GM12878 (cell line): ENCODE measurements at regions of chr12 and their contacts with region 1.

Region 1: GRCh38 chr12:94149119-94149780 is 873 bp downstream of the PLXNC1 start:
- DNase-seq: no peak
- ATAC-seq: peak; percentile 50
- H3K4me3 ChIP-seq: peak overlapping the region; percentile 91
- H3K27ac ChIP-seq: peak overlapping the region; percentile 70
- H3K4me1 ChIP-seq: peaks cover 13% of the 10 kb centered on the region
- H3K27me3 ChIP-seq: no peaks in the 10 kb centered on the region
- CTCF ChIP-seq: peak; percentile 49 to 86 (median 70); a peak in 5 of 6 replicates
- EP300 ChIP-seq: no peak
- POLR2A ChIP-seq: peak; percentile 66
- RAD21 ChIP-seq: peak; percentile 60

Region 2: GRCh38 chr12:94172973-94173372 is 23.7 kb after region 1 on chr12:
- CTCF ChIA-PET with region 1: interaction called, 7 read pairs
- POLR2A ChIA-PET with region 1: interaction called, 10 read pairs
- RAD21 ChIA-PET with region 1: interaction called, 60 read pairs
- SMC1A ChIA-PET with region 1: interaction called, 367 read pairs
- in situ Hi-C with region 1: no loop called
- intact Hi-C with region 1: no loop called
- DNase-seq: no peak
- ATAC-seq: no peak
- H3K4me3 ChIP-seq: no peak overlapping the region
- H3K27ac ChIP-seq: peak overlapping the region; percentile 92
- H3K4me1 ChIP-seq: peaks cover 47% of the 10 kb centered on the region
- H3K27me3 ChIP-seq: no peaks in the 10 kb centered on the region
- CTCF ChIP-seq: no peak
- EP300 ChIP-seq: no peak
- POLR2A ChIP-seq: no peak
- RAD21 ChIP-seq: no peak

Region 3: DNA sequence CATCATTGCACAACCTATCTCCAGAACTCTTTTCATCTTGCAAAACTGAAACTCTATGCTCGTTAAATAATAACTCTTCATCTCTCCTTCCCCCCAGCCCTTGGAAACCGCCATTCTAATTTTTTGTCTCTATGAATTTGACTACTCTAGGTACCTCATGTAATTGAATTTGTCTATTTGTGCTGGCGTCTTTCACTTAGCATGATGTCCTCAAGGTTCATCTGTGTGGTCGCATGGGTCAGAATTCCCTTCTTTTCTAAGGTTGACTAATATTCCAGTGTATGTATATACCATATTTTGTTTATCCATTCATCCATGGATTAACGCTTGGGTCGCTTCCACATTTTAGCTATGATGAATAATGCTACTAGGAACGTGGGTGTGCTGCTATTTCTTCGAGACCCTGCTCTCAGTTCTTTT is 79.2 kb after region 1 on chr12:
- CTCF ChIA-PET with region 1: interaction called, 3 read pairs
- POLR2A ChIA-PET with region 1: interaction called, 3 read pairs
- RAD21 ChIA-PET with region 1: interaction called, 6 read pairs
- SMC1A ChIA-PET with region 1: interaction called, 5 read pairs
- in situ Hi-C with region 1: no loop called
- intact Hi-C with region 1: loop called (anchors 2 kb)
- DNase-seq: no peak
- ATAC-seq: peak; percentile 83
- H3K4me3 ChIP-seq: no peak overlapping the region
- H3K27ac ChIP-seq: 0 out of 2 replicates have a peak overlapping the region, but pooled peaks have one; percentile 13
- H3K4me1 ChIP-seq: peaks cover 39% of the 10 kb centered on the region
- H3K27me3 ChIP-seq: no peaks in the 10 kb centered on the region
- CTCF ChIP-seq: no peak
- EP300 ChIP-seq: peak in 1 of 2 experiments; percentile 39; a peak in 1 of 4 replicates
- POLR2A ChIP-seq: no peak
- RAD21 ChIP-seq: no peak

Region 4: DNA sequence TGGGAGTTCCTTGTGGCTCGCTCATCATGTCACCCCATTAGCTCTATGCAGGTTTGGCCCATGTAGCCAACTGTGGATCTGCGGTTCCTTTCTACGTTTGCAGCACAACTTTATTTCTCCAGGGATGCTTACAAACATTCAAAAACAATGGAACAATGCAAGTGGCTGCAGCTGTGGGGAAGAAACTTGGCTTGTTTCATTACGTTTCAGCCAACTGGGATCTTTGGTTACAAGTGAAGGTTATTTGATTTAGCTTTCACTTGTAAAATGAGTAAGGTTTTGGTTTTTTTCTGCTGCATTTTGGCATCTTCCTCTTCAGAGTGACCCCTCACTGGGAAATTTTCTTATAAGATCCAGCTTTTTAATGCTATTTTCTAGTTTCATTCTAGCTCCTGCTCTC is 105.0 kb after region 1 on chr12:
- CTCF ChIA-PET with region 1: interaction called, 3 read pairs
- POLR2A ChIA-PET with region 1: interaction called, 5 read pairs
- RAD21 ChIA-PET with region 1: interaction called, 10 read pairs
- SMC1A ChIA-PET with region 1: interaction called, 39 read pairs
- in situ Hi-C with region 1: no loop called
- intact Hi-C with region 1: no loop called
- DNase-seq: no peak
- ATAC-seq: no peak
- H3K4me3 ChIP-seq: no peak overlapping the region
- H3K27ac ChIP-seq: no peak overlapping the region
- H3K4me1 ChIP-seq: peaks cover 19% of the 10 kb centered on the region
- H3K27me3 ChIP-seq: no peaks in the 10 kb centered on the region
- CTCF ChIP-seq: no peak
- EP300 ChIP-seq: no peak
- POLR2A ChIP-seq: no peak
- RAD21 ChIP-seq: no peak

Region 5: GRCh38 chr12:94305130-94305957 is 156.1 kb after region 1 on chr12:
- CTCF ChIA-PET with region 1: interaction called, 4 read pairs
- POLR2A ChIA-PET with region 1: no interaction called
- RAD21 ChIA-PET with region 1: interaction called, 6 read pairs
- SMC1A ChIA-PET with region 1: interaction called, 7 read pairs
- in situ Hi-C with region 1: no loop called
- intact Hi-C with region 1: loop called (anchors 5 kb)
- DNase-seq: peak; percentile 67
- ATAC-seq: peak; percentile 71
- H3K4me3 ChIP-seq: no peak overlapping the region
- H3K27ac ChIP-seq: peak overlapping the region; percentile 42
- H3K4me1 ChIP-seq: peaks cover 35% of the 10 kb centered on the region
- H3K27me3 ChIP-seq: no peaks in the 10 kb centered on the region
- CTCF ChIP-seq: no peak
- EP300 ChIP-seq: peak; percentile 73 to 76; a peak in 3 of 4 replicates
- POLR2A ChIP-seq: no peak
- RAD21 ChIP-seq: no peak

Region 6: GRCh38 chr12:94459728-94460615 is 310.7 kb after region 1 on chr12 and contains the start of gene CEP83:
- CTCF ChIA-PET with region 1: no interaction called
- POLR2A ChIA-PET with region 1: no interaction called
- RAD21 ChIA-PET with region 1: interaction called, 9 read pairs
- SMC1A ChIA-PET with region 1: interaction called, 9 read pairs
- in situ Hi-C with region 1: no loop called
- intact Hi-C with region 1: loop called (anchors 2 kb)
- DNase-seq: peak; percentile 80
- ATAC-seq: peak; percentile 96
- H3K4me3 ChIP-seq: peak within 1 kb of the TSS; percentile 67
- H3K27ac ChIP-seq: peak within 1 kb of the TSS; percentile 94
- H3K4me1 ChIP-seq: no peaks in the 10 kb centered on the region
- H3K27me3 ChIP-seq: no peaks in the 10 kb centered on the region
- CTCF ChIP-seq: no peak
- EP300 ChIP-seq: peak in 1 of 2 experiments; percentile 53; a peak in 1 of 4 replicates
- POLR2A ChIP-seq: peak; percentile 95
- RAD21 ChIP-seq: no peak
- polyA plus RNA-seq, gene CEP83: 4.3 to 5.0 TPM